Adrenal gland (tissue), 19 donors: ENCODE measurements at regions of chr10 and their contacts with region 1.

Region 1: GRCh38 chr10:122435212-122435827 is 19.1 kb upstream of the ARMS2 start:
- DNase-seq: no peak
- H3K4me3 ChIP-seq: no peak overlapping the region
- H3K27ac ChIP-seq: no peak overlapping the region
- H3K4me1 ChIP-seq: no peaks in the 10 kb centered on the region
- H3K27me3 ChIP-seq: no peaks in the 10 kb centered on the region
- CTCF ChIP-seq: peak; percentile 64 to 87 (median 78)
- POLR2A ChIP-seq: no peak

Region 2: DNA sequence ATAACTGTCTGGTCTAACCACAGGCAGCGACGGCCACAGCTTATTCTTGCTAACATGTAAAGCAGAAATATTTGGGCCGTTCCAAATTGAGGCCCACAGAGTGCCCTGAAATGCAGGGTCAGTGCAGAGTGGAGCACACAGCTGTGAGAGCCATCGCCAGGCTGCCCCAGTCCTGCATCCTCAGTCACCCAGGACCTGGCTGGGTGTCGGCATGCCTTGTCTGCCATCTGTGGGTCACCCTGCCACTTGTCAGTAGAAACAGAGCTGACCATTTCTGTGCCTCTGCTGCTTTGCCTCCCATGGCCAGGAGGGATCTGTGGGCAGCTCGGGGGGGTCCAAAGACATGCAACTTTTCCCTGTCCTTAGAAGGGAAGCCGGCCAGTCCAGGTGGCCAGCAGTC is 221.6 kb before region 1 on chr10:
- intact Hi-C with region 1: no loop called
- DNase-seq: peak in 1 of 7 donors; percentile 74
- H3K4me3 ChIP-seq: no peak overlapping the region
- H3K27ac ChIP-seq: no peak overlapping the region
- H3K4me1 ChIP-seq: no peaks in the 10 kb centered on the region
- H3K27me3 ChIP-seq: no peaks in the 10 kb centered on the region
- CTCF ChIP-seq: no peak
- POLR2A ChIP-seq: no peak

Region 3: DNA sequence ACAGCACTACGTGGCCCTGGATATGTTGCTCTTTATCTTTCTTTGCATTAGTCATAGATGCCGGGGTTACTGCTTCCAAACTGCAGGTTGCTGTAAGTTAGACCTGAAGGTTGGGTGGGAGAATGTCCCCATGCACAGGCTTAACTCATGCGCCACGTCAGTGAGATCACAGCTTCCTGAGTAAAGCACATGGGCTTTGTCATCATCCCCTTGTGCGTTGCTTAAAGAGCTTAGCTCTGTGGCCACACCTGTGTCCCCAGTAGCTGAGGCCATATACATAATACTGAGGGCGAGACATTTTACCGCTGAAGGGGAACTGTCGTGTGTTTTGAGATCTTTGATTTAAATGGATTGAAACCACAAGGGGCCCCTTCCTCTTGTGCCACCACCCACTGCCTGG is 210.0 kb before region 1 on chr10:
- intact Hi-C with region 1: no loop called
- DNase-seq: no peak
- H3K4me3 ChIP-seq: no peak overlapping the region
- H3K27ac ChIP-seq: no peak overlapping the region
- H3K4me1 ChIP-seq: no peaks in the 10 kb centered on the region
- H3K27me3 ChIP-seq: no peaks in the 10 kb centered on the region
- CTCF ChIP-seq: no peak
- POLR2A ChIP-seq: no peak

Region 4: DNA sequence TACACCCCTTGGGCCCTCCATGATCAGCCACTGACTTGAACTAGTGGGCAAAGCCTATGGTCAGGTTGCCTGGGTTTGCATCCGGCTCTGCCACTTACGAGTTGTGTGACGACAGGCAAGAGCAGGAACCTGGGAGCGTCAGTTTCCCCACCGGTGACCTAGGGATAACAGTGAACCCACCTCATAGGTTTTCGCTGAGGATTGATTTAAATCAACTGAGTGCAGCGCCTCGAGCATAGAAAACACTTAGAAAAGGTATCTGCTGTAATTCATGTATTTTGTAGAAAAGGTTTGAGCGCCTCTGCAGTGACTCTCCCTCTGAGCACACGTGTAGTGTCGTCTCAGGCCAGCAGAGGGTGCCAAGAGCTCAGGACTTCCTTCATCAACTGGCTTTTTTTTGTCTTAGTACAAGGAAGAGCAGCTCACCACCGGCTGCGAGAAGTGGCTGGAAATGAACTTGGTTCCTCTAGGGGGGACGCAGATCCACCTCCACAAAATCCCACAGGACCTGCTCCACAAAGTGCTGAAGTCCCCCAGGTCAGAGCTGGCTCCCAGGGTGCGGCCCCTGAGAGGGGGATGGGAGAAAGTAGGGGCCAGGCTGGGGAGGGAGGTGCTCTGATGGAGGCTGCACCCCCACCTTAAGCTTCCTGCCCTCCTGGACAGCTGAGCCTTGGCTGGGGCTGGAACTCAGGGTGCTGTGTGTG is 136.6 kb before region 1 on chr10:
- intact Hi-C with region 1: loop called (anchors 5 kb)
- DNase-seq: peak; percentile 65 to 88 (median 76)
- H3K4me3 ChIP-seq: no peak overlapping the region
- H3K27ac ChIP-seq: no peak overlapping the region
- H3K4me1 ChIP-seq: peaks cover 0 to 7% of the 10 kb centered on the region in 2 donors
- H3K27me3 ChIP-seq: peaks cover 7% of the 10 kb centered on the region
- CTCF ChIP-seq: peak; percentile 84 to 96 (median 92)
- POLR2A ChIP-seq: no peak

Region 5: DNA sequence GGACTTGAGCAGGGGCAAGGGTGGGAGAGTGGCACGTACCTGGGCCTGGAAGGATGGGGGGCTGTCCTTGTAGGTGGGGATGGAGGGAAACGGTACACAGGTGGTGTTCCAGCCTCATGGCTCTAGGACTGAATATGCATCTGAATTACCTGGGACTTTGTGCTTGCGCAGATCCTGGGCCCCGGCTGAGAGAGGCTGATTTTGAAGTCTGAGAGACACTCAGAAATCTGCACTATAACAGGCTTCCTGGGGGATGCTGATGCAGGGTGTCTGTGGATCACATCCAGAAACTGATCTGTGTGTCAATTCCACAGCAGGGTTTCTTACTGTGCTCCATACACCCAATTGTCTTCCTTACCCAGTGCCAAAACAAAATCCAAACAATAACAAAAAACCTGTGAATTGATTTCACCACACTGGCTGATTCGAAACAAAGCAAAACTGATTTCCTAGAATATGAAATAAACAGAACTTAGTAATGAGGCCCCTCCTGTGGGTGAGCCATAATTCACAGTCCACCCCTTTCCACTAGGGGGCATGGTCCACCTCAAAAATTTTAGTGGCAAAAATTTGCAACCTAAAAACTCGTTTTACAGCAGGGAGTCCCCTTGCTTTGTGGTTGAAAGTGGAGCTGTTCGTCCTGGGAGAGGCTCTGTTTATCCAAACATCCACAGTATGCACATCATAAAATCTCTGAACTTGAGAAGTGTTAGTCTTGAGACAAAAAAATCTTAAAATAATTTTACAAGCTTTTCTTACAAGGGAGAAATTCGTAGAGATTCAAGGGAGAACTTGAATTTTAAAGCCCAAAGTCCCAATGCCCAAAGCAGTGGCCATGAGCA is 92.8 kb before region 1 on chr10:
- intact Hi-C with region 1: loop called (anchors 5 to 10 kb)
- DNase-seq: peak; percentile 30 to 64 (median 50)
- H3K4me3 ChIP-seq: no peak overlapping the region
- H3K27ac ChIP-seq: no peak overlapping the region
- H3K4me1 ChIP-seq: no peaks in the 10 kb centered on the region
- H3K27me3 ChIP-seq: no peaks in the 10 kb centered on the region
- CTCF ChIP-seq: peak; percentile 64 to 77 (median 77)
- POLR2A ChIP-seq: no peak

Region 6: DNA sequence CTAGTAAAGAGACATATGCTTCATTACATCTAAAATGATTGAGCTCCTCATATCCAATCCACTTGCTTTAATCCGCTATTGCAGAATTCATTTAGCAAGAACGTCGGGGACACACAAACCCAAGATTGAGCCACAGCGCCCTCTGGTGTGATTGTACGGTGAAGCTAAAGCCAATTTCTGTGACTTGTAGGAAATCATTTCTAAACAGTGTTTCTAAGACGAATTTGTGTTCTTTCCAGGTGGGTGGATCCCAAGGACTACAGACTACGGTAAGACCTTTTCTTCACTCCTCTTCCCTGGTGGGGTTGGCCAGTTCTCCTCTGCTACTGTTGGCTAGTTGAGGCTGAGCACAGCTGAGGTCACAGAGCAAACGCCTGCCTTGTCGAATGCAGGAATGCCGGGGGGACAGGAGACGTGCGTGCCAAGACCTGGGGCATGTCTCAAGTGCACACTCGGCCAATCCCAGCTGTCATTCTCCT is 130.4 kb after region 1 on chr10:
- intact Hi-C with region 1: loop called in 1 of 2 experiments (anchors 5 kb)
- DNase-seq: peak; percentile 75 to 93 (median 77)
- H3K4me3 ChIP-seq: no peak overlapping the region
- H3K27ac ChIP-seq: no peak overlapping the region
- H3K4me1 ChIP-seq: no peaks in the 10 kb centered on the region
- H3K27me3 ChIP-seq: peaks cover 8% of the 10 kb centered on the region
- CTCF ChIP-seq: peak; percentile 74 to 89 (median 84)
- POLR2A ChIP-seq: no peak